PC-3 (cell line): ENCODE measurements at regions of chr5 and their contacts with region 1.

Region 1: DNA sequence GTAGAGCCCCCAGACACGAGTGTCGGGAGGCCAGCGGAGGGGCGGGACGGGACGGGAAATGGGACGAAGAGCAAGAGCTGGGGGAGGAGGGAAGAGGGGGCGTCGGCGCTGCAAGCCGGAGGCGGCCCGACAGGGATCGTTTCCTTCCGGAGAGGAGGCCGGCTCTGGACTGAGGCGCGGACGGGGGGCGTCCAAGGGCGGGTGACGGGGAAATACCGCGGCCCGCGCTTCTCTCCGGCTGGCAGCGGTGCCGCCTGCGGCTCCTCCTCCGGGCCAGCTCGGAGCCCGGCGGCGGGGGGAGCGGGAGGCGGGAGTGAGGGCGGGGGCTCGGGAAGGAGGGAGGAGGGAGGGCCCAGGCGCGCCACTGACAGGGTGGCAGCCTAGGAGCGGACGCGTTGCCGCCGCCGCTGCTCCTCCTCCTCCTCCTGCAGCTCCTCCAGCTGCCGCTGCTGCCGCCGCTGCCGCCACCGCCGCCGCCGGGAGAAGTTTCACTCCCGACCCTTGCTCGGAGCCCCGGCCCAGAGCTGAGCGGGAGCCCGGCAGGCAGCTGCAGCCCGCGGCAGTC is at the start of gene CHSY3:
- DNase-seq: peak; percentile 54
- ATAC-seq: peak; percentile 84
- H3K4me3 ChIP-seq: peak within 1 kb of the TSS; percentile 69
- H3K27ac ChIP-seq: no peak within 1 kb of the TSS
- H3K4me1 ChIP-seq: no peaks in the 10 kb centered on the region
- H3K27me3 ChIP-seq: peaks cover 13% of the 10 kb centered on the region
- CTCF ChIP-seq: no peak
- total RNA-seq, gene CHSY3: 1.7 and 1.8 TPM in 2 replicates

Region 2: DNA sequence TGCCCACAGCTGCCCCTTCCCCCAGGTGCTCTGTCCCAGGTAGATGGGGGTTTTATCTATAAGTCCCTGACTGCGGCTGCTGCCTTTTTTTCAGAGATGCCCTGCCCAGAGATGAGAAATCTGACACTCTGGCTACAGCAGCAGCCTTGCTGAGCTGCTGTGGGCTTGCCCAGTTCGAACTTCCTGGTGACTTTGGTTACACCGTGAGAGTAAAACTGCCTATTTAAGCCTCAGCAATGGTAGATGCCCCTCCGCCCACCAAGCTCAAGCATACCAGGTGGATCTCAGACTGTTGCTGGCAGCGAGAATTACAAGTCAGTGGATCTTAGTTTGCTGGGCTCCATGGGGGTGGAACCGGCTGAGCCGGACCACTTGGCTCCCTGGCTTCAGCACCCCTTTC is 99.5 kb before region 1 on chr5:
- CTCF ChIA-PET with region 1: no interaction called
- POLR2A ChIA-PET with region 1: no interaction called
- intact Hi-C with region 1: no loop called
- DNase-seq: no peak
- ATAC-seq: no peak; the same call in 1 of the 2 replicates
- H3K4me3 ChIP-seq: no peak overlapping the region
- H3K27ac ChIP-seq: no peak overlapping the region
- H3K4me1 ChIP-seq: no peaks in the 10 kb centered on the region
- H3K27me3 ChIP-seq: no peaks in the 10 kb centered on the region
- CTCF ChIP-seq: no peak

Region 3: GRCh38 chr5:129917224-129917623 is 13.0 kb after region 1 on chr5:
- CTCF ChIA-PET with region 1: no interaction called
- POLR2A ChIA-PET with region 1: no interaction called
- intact Hi-C with region 1: no loop called
- DNase-seq: no peak
- ATAC-seq: peak; percentile 29; the same call in 1 of the 2 replicates
- H3K4me3 ChIP-seq: no peak overlapping the region
- H3K27ac ChIP-seq: no peak overlapping the region
- H3K4me1 ChIP-seq: no peaks in the 10 kb centered on the region
- H3K27me3 ChIP-seq: no peaks in the 10 kb centered on the region
- CTCF ChIP-seq: no peak

Region 4: DNA sequence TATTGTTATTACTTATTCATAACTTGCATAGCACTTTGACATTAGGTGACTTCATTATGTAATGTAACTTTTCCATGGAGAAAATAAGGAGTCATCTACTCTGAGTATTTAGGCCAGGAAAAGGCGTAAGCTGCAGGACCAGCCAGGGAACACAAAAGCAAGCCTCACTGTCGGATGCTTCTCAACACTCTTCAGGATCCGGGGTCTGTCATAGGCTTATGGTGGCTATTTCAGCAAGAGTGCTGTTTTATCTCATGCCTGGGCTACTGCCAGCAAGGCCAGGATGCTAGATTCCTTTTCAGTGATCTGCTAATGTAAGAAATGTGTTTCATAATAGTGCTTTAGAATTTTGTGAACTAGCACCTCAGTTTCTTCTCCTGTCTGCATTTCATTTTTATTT is 162.5 kb after region 1 on chr5:
- CTCF ChIA-PET with region 1: no interaction called
- POLR2A ChIA-PET with region 1: no interaction called
- intact Hi-C with region 1: loop called (anchors 5 kb)
- DNase-seq: no peak
- ATAC-seq: no peak
- H3K4me3 ChIP-seq: no peak overlapping the region
- H3K27ac ChIP-seq: no peak overlapping the region
- H3K4me1 ChIP-seq: peaks cover 4% of the 10 kb centered on the region; the same call in 1 of the 2 replicates
- H3K27me3 ChIP-seq: no peaks in the 10 kb centered on the region
- CTCF ChIP-seq: no peak

Region 5: GRCh38 chr5:130541617-130542221 is 637.5 kb after region 1 on chr5:
- CTCF ChIA-PET with region 1: no interaction called
- POLR2A ChIA-PET with region 1: no interaction called
- intact Hi-C with region 1: loop called (anchors 10 kb)
- DNase-seq: peak; percentile 86
- ATAC-seq: peak; percentile 65
- H3K4me3 ChIP-seq: peak overlapping the region; percentile 3; the same call in 1 of the 2 replicates
- H3K27ac ChIP-seq: peak overlapping the region; percentile 88
- H3K4me1 ChIP-seq: peaks cover 46% of the 10 kb centered on the region
- H3K27me3 ChIP-seq: no peaks in the 10 kb centered on the region
- CTCF ChIP-seq: no peak

Region 6: DNA sequence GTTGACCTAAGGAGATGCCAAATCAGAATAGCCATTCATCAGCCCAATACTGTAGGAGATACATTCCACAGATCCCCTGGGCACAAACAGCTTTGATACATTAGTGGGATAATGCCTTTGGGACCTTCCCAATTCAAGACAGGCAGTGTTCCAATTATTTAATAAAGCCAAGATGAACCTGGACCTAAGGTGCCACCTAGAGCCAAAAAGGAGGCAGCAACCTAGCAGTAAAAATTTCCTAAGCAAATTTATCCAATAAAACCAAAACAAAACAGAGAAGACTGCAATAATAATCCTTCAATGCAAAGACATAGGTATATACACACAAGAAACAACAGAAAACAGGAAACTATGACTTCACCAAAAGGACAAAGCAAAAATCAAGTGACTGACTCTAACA is 1007.9 kb after region 1 on chr5:
- CTCF ChIA-PET with region 1: no interaction called
- POLR2A ChIA-PET with region 1: no interaction called
- intact Hi-C with region 1: loop called (anchors 5 kb)
- DNase-seq: peak; percentile 42
- ATAC-seq: no peak; the same call in 1 of the 2 replicates
- H3K4me3 ChIP-seq: no peak overlapping the region
- H3K27ac ChIP-seq: no peak overlapping the region
- H3K4me1 ChIP-seq: no peaks in the 10 kb centered on the region
- H3K27me3 ChIP-seq: no peaks in the 10 kb centered on the region
- CTCF ChIP-seq: peak; percentile 65

Region 7: DNA sequence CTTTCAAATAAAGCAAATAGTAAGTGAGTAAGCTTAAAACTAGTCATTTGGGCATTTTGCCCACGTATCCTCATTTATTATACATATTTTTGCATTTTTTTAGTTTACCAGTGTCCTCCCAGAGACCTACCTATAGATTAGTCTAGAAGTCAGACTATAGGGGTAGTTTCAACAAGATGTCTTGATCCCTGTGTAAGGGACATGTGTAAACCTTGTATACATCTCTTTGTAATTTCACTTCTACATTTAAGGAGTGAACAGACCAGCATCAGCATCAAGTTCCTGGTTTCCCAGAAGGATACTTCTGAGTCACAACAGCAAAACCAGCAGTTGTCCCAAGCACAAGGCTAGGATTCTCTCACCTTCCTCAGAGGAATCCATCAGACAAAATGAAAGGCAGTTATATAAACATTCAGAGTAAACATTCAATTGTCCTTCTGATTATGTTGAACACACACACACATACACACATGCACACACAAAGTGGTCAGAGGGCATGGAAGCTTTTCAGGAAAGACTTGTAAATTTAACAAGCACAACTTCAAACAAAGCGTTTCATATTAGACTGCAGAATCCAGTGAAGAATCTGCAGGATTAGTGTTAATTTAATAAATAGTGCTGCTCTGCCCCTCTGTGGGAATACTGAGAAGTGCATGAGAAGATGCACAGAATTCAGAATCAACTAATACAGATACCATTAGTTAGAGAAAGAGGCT is 1205.5 kb after region 1 on chr5:
- CTCF ChIA-PET with region 1: no interaction called
- POLR2A ChIA-PET with region 1: no interaction called
- intact Hi-C with region 1: loop called (anchors 1 kb)
- DNase-seq: peak; percentile 64
- ATAC-seq: peak; percentile 81
- H3K4me3 ChIP-seq: no peak overlapping the region
- H3K27ac ChIP-seq: no peak overlapping the region
- H3K4me1 ChIP-seq: no peaks in the 10 kb centered on the region; the same call in 1 of the 2 replicates
- H3K27me3 ChIP-seq: no peaks in the 10 kb centered on the region
- CTCF ChIP-seq: peak; percentile 74